ENCODE measurements at regions of chr6 and their contacts with region 1.

Region 1: GRCh38 chr6:3732345-3733141 is 19.0 kb downstream of the PXDC1 start:
- DNase-seq: peak; percentile 72 to 91 (median 83)
- H3K4me3 ChIP-seq: no peak overlapping the region
- H3K27ac ChIP-seq: peak overlapping the region in 1 of 5 donors; percentile 60
- H3K4me1 ChIP-seq: peaks cover 0 to 5% of the 10 kb centered on the region in 2 donors
- H3K27me3 ChIP-seq: no peaks in the 10 kb centered on the region
- CTCF ChIP-seq: peak; percentile 77 to 94 (median 90)
- POLR2A ChIP-seq: no peak

Region 2: GRCh38 chr6:3139090-3139903 is 593.2 kb before region 1 on chr6:
- intact Hi-C with region 1: loop called in 1 of 2 experiments (anchors 10 kb)
- DNase-seq: peak; percentile 39 to 77 (median 45)
- H3K4me3 ChIP-seq: no peak overlapping the region
- H3K27ac ChIP-seq: peak overlapping the region in 3 of 5 donors; percentile 6 to 81 (median 15)
- H3K4me1 ChIP-seq: peaks cover 0 to 4% of the 10 kb centered on the region in 2 donors
- H3K27me3 ChIP-seq: no peaks in the 10 kb centered on the region
- CTCF ChIP-seq: no peak
- POLR2A ChIP-seq: peak in 1 of 2 donors; percentile 7

Region 3: DNA sequence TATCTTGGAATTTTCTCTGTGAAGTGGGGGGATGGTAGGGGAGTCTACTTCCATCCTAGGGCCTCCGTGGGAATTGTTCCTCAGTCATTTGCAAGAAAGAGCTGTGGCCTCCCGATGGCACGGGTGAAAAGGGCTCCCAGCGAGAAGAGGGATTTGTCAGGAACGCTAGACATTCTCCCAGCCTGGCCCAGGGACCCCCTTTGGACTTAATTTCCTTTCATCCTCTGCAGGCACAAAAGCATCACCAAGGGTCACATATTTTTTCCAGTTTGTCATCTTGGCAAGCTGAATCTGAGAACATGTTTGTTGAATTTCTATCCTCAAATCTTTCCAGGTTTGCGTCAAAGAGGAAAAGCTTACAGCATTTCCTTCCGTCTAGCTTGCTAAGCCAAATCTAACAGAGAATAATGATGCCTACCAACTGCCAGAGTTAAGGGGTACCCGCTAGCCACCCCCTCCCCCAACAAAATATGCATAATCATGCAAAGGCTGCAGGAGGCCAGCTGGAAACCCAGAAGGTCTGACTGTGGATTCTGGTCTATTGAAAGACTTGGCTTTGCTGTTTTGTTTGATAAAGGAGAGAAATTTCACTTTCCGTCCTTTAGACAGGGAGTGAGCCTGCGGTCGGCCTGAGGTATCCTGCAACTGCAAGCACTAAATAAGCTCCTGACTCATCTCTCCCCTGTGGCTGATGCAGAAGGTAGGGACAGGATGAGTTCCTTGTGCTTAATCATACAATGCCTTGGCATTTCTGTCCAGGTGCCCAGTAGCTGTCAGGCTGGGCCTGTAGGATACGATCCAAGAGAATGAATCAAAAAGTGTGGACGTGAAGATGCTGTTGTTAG is 450.7 kb before region 1 on chr6:
- intact Hi-C with region 1: loop called (anchors 2 to 5 kb)
- DNase-seq: peak in 4 of 7 donors; percentile 16 to 37 (median 34)
- H3K4me3 ChIP-seq: no peak overlapping the region
- H3K27ac ChIP-seq: peak overlapping the region in 2 of 5 donors; percentile 33 to 71
- H3K4me1 ChIP-seq: peaks cover 0 to 5% of the 10 kb centered on the region in 2 donors
- H3K27me3 ChIP-seq: no peaks in the 10 kb centered on the region
- CTCF ChIP-seq: no peak
- POLR2A ChIP-seq: no peak

Region 4: GRCh38 chr6:3410385-3411360 is 321.9 kb before region 1 on chr6:
- intact Hi-C with region 1: loop called in 1 of 2 experiments (anchors 10 kb)
- DNase-seq: peak; percentile 28 to 75 (median 60)
- H3K4me3 ChIP-seq: no peak overlapping the region
- H3K27ac ChIP-seq: no peak overlapping the region
- H3K4me1 ChIP-seq: no peaks in the 10 kb centered on the region
- H3K27me3 ChIP-seq: no peaks in the 10 kb centered on the region
- CTCF ChIP-seq: peak; percentile 42 to 71 (median 64)
- POLR2A ChIP-seq: no peak

Region 5: GRCh38 chr6:4018172-4018905 is 285.8 kb after region 1 on chr6:
- intact Hi-C with region 1: no loop called
- DNase-seq: peak; percentile 94 to 96 (median 95)
- H3K4me3 ChIP-seq: peak overlapping the region; percentile 63 to 92 (median 79)
- H3K27ac ChIP-seq: peak overlapping the region; percentile 96 to 99 (median 98)
- H3K4me1 ChIP-seq: peaks cover 20 to 40% of the 10 kb centered on the region in 2 donors
- H3K27me3 ChIP-seq: no peaks in the 10 kb centered on the region
- CTCF ChIP-seq: peak in 5 of 6 experiments; percentile 34 to 64 (median 42)
- POLR2A ChIP-seq: peak; percentile 77 to 95